GM10248 (cell line): ENCODE measurements at regions of chr6 and their contacts with region 1.

Region 1: DNA sequence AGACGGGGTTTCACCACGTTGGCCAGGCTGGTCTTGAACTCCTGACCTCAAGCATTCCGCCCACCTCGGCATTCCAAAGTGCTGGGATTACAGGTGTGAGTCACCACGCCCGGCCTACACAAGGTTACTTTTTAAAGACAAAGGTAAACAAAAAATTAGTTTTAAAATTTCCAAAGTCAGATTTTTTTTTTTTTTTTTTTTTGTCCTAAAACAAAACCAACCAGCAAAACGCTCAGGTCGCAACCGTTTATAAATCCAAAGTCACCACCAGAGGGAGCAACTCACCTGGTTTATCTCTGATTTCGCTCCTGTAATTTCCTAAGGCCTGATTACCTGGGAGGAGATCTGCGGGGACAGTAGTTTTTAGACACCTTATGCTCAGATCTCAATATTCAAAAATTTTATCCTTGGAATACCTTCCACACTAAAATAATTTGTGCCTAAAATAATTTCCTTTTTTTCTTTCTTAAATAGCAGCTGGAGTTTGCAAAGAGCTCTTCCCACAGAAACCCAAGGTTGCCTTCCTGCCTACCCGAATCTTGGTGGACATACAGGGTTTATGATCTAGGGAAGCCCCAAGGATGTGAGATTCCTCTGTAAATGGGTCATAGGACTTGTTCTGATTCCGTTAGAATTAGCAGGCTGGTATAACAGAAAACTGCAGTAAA is 19.8 kb upstream of the TREM1 start:
- DNase-seq: peak; percentile 45
- CTCF ChIP-seq: peak; percentile 53

Region 2: DNA sequence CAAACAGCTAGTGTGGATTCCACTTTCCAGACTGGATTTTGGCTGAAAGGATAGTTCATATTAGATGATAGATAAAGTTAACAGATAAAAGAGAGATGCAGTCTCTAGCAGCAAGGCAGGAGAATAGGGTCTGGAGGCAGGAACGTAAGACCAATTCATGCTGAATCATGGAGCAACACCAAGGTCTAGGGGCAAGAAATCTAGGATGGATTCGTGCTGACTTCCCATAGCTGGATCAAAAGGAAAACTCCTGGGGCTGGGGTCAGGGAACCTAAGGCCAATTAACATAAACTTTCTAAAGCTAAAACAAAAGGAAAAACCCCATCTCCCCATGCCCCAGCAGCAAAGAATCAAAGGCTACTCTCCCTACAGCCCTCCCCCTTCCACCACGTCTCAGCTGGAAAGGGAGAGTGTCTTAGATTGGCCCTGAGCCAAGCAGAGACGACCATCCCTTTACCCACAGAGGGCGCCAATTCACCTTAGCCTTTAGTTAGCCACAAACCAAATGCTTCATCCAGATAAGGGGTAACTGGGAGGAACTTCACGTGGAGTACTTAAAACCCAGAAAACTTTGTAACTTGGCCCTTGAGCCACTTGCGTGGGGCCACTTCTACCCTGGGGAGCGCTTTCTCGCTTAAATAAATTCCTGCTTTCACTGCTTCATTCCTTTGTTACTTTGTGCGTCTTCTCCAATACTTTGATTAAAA is 27.5 kb before region 1 on chr6:
- CTCF ChIA-PET with region 1: interaction called, 18 read pairs
- POLR2A ChIA-PET with region 1: no interaction called
- DNase-seq: peak; percentile 55
- CTCF ChIP-seq: peak; percentile 54

Region 3: GRCh38 chr6:41286544-41287346 is 19.6 kb before region 1 on chr6 and contains the start of gene TREM1:
- CTCF ChIA-PET with region 1: interaction called, 37 read pairs
- POLR2A ChIA-PET with region 1: no interaction called
- DNase-seq: no peak
- CTCF ChIP-seq: no peak

Region 4: DNA sequence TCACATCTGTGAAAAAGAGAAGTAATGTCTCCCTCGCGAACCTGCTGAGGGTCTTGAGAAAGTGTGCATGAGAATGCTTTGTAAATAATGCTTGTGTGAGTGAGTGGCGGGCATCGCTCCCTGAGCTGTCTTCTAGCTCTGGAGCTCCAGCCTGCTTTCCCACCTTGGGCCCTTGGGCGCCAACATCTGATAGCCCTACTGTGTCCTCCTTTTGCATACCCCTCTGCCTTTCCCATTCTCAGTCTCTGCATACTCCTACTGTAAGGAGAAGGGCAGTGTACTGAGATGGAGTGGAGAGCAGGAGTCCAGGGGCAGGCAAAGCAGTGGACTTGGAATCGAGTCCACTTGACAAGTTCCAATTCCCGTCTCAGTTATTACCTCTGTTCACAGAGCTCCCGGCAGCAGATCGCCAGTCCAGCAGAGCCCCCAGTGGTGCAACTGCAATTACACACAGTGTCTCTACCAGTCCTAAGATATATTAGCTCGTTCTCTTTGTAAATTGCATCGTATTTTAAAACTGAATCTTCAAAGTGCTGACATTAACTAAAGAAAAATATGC is 28.2 kb after region 1 on chr6:
- CTCF ChIA-PET with region 1: interaction called, 33 read pairs
- POLR2A ChIA-PET with region 1: interaction called, 3 read pairs
- DNase-seq: no peak
- CTCF ChIP-seq: peak; percentile 25